ENCODE measurements at regions of chr20 and their contacts with region 1.

Region 1: DNA sequence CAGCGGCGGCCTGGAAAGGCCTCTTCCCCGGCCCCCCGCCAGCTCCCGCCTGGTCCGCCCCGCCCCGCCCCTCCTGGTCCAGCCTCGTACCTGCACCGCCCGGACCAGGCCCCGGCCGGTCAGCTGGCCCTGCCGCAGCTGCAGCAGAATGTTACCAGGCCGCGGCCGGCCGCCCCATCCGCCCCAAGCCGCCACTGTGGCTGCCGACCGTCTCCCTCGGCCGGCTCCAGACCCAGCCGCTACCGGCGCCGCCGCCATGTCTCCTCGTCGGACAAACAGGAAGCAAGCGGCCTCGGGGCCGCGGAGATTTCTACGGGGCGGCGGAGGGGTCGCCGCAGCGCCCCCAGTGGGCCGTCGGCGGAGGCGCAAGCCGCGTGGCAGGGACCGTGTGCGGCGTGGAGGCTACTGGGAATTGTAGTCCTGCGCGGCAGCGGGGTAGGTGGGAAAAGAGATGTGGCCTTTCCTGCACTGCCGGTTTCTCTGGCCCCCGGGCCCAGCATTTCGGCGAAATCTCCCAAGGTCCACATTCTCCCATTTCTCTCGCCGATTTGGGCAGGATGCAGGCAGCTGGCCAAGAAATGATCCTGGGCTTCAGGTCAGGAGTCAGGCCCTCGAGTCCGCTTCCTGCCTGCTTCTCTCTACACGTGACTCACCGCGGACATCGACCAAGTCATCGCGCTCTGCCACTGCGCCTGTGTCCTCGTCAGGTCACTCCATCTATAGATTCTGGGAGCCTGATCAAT is at the start of gene TRPC4AP:
- DNase-seq: peak; percentile 65
- H3K4me3 ChIP-seq: peak within 1 kb of the TSS; percentile 93
- H3K27ac ChIP-seq: peak within 1 kb of the TSS; percentile 88
- H3K27me3 ChIP-seq: no peaks in the 10 kb centered on the region
- CTCF ChIP-seq: peak; percentile 90
- polyA plus RNA-seq, gene TRPC4AP: 85.4 and 94.0 TPM in 2 replicates

Region 2: GRCh38 chr20:34842143-34842542 is 250.6 kb before region 1 on chr20:
- CTCF ChIA-PET with region 1: no interaction called
- POLR2A ChIA-PET with region 1: no interaction called
- DNase-seq: no peak
- H3K4me3 ChIP-seq: no peak overlapping the region
- H3K27ac ChIP-seq: no peak overlapping the region
- H3K27me3 ChIP-seq: no peaks in the 10 kb centered on the region
- CTCF ChIP-seq: no peak

Region 3: GRCh38 chr20:35066194-35066593 is 26.5 kb before region 1 on chr20:
- CTCF ChIA-PET with region 1: interaction called, 20 read pairs
- POLR2A ChIA-PET with region 1: interaction called, 3 read pairs
- DNase-seq: no peak
- H3K4me3 ChIP-seq: no peak overlapping the region
- H3K27ac ChIP-seq: no peak overlapping the region
- H3K27me3 ChIP-seq: no peaks in the 10 kb centered on the region
- CTCF ChIP-seq: no peak

Region 4: DNA sequence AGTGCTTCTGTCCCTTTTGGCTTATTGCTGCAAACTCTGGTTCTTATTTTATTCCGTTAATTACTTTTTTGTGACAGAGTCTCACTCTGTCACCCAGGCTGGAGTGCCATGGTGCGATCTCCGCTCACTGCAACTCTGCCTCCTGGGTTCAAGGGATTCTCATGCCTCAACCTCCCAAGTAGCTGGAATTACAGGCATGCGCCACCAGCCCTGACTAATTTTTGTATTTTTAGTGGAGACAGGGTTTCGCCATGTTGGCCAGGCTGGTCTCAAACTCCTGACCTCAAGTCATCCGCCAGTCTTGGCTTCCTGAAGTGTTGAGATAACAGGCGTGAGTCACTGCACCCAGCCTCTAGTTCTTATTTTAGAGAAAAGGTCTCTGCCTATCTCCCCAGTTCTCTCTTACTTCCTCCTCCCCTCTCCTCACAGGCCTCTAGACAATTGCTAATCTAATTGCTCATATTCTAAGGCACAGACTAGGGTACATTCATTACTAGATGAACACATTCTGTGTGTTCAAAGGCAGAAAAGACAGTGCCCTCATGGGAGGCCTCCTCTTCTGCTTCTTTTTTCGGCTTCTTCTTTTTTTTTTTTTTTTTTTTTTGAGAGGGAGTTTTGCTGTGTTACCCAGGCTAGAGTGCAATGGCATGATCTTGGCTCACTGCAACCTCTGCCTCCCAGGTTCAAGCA is 27.5 kb after region 1 on chr20:
- CTCF ChIA-PET with region 1: interaction called, 15 read pairs
- POLR2A ChIA-PET with region 1: interaction called, 3 read pairs
- DNase-seq: peak; percentile 32
- H3K4me3 ChIP-seq: no peak overlapping the region
- H3K27ac ChIP-seq: no peak overlapping the region
- H3K27me3 ChIP-seq: no peaks in the 10 kb centered on the region
- CTCF ChIP-seq: no peak

Region 5: DNA sequence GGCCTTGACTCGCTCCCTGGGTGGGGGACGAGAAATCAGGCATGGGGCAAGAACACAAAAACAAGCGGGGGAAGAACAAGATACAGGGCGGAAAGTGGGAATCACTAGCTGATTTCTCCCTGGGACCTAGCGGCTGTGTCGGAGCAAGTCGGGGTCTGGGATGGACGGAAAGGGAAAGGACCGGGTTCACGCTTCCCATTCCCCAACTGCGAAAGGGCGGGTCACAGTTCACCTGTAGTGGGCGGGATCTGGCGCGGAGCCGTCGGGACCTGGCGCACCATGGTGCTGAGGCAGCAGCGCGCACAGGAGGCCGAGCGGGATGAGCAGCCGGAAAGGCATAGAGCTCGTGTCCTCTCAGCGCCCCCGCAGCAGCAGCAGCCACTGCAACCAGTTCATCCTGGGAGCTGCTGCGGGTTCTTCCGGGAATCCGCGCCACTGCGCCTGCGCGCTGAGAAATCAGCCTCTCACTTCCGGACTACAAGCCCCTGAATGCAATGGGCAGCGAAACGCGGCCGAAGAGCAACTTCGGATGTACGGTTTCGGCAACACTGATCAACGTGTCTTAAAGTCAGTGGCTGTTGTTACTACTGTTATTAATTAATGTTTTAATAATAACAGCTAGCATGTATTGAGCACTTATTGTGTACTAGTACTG is 54.4 kb after region 1 on chr20 and contains the start of gene EDEM2:
- CTCF ChIA-PET with region 1: interaction called, 27 read pairs
- POLR2A ChIA-PET with region 1: interaction called, 3 read pairs
- DNase-seq: peak; percentile 93
- H3K4me3 ChIP-seq: peak within 1 kb of the TSS; percentile 98
- H3K27ac ChIP-seq: peak within 1 kb of the TSS; percentile 68
- H3K27me3 ChIP-seq: no peaks in the 10 kb centered on the region
- CTCF ChIP-seq: no peak
- polyA plus RNA-seq, gene EDEM2: 28.3 and 30.3 TPM in 2 replicates

Region 6: GRCh38 chr20:35207950-35208611 is 115.4 kb after region 1 on chr20:
- CTCF ChIA-PET with region 1: interaction called, 76 read pairs
- POLR2A ChIA-PET with region 1: no interaction called
- DNase-seq: peak; percentile 61
- H3K4me3 ChIP-seq: peak overlapping the region; percentile 17; the same call in 1 of the 2 replicates
- H3K27ac ChIP-seq: peak overlapping the region; percentile 47
- H3K27me3 ChIP-seq: no peaks in the 10 kb centered on the region
- CTCF ChIP-seq: peak; percentile 84